ENCODE measurements at regions of chr6 and their contacts with region 1.

Region 1: GRCh38 chr6:15621203-15622044 is 41.4 kb downstream of the DTNBP1 start:
- DNase-seq: peak in 2 of 10 donors; percentile 13 to 15

Region 2: GRCh38 chr6:14129575-14129974 is 1491.8 kb before region 1 on chr6:
- intact Hi-C with region 1: loop called (anchors 10 kb)
- DNase-seq: peak in 9 of 10 donors; percentile 32 to 93 (median 54)

Region 3: GRCh38 chr6:15504581-15505350 is 116.7 kb before region 1 on chr6:
- intact Hi-C with region 1: loop called (anchors 5 kb)
- DNase-seq: peak; percentile 48 to 94 (median 72)

Region 4: DNA sequence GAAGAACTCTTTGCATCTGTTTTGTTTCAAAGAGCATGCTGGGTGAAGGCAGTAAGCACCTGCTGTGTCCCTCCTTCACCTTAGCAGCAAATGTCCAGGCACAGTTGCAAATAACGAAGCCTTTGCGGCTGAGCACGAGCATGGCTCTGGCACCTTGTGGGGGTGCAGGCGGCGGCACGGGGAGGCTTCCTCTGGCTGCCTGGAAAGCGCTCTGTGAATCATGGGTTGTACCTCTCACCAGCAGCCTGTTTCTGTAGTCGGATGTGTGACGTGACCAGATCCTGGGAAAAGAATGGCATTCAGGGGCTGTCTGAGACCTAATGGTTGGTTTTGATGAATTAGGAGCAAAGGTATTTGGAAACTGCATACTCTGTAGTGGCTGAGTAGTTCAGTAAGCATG is 103.4 kb before region 1 on chr6:
- intact Hi-C with region 1: loop called (anchors 5 kb)
- DNase-seq: peak in 2 of 10 donors; percentile 84 to 88

Region 5: GRCh38 chr6:15674690-15675386 is 53.4 kb after region 1 on chr6:
- intact Hi-C with region 1: no loop called
- DNase-seq: no peak